ENCODE measurements at regions of chr1 and their contacts with region 1.

Region 1: DNA sequence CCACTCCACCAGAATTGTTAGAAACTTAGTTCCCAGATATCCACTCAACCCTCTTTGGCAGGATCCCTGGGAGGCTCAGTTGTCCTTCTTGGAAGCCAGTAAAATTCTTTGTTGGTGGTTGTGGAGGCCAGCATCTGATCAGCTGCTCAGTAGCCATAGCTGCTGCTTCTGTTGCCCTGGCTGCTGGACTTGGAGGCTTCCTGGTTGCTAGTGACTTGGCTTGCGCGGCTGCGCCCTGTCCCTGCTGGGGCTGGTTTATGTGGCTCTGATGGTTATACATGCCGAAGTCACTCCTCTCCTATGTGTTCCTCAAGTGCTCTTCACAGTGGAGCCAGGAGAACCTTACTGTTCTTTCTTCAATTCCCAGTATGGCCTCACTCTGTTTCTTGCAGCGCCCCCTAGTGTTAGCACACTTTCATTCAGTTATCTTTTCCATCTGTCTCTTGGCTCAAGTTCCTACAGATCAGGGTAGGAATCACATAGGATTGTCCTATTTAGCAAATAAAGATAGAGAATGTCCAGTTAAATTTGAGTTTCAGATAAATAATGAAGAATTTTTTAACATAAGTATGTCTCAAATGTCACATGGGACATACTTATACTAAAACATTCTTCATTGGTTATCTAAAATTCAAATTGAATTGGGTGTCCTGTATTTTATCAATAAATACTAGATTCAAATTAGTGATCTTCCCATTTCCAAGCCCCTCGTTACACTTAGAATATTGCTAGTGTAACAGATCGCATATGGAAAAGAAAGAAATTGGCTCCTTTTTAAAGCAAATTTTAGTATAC is 176.4 kb downstream of the TGFB2 start:
- DNase-seq: peak; percentile 32
- H3K4me3 Mint-ChIP-seq: no peak overlapping the region
- H3K27ac Mint-ChIP-seq: no peak overlapping the region
- H3K4me1 Mint-ChIP-seq: no peaks in the 10 kb centered on the region
- H3K27me3 Mint-ChIP-seq: peaks cover 9% of the 10 kb centered on the region

Region 2: GRCh38 chr1:218299416-218299815 is 222.2 kb before region 1 on chr1:
- CTCF ChIA-PET with region 1: no interaction called
- POLR2A ChIA-PET with region 1: no interaction called
- DNase-seq: no peak
- H3K4me3 Mint-ChIP-seq: no peak overlapping the region
- H3K27ac Mint-ChIP-seq: no peak overlapping the region
- H3K4me1 Mint-ChIP-seq: peaks cover 8% of the 10 kb centered on the region
- H3K27me3 Mint-ChIP-seq: no peaks in the 10 kb centered on the region

Region 3: GRCh38 chr1:218339267-218339831 is 182.2 kb before region 1 on chr1:
- CTCF ChIA-PET with region 1: interaction called, 12 read pairs
- POLR2A ChIA-PET with region 1: no interaction called
- DNase-seq: no peak
- H3K4me3 Mint-ChIP-seq: no peak overlapping the region
- H3K27ac Mint-ChIP-seq: no peak overlapping the region
- H3K4me1 Mint-ChIP-seq: no peaks in the 10 kb centered on the region
- H3K27me3 Mint-ChIP-seq: peaks cover 3% of the 10 kb centered on the region

Measured in activated CD4-positive, alpha-beta memory T cell treated with anti-CD3 and anti-CD28 coated beads, Interleukin-2, amount 10 ng/mL, durations not matched to agents 7 days and 5 days (primary cell).